ENCODE measurements at regions of chr15 and their contacts with region 1.

Region 1: DNA sequence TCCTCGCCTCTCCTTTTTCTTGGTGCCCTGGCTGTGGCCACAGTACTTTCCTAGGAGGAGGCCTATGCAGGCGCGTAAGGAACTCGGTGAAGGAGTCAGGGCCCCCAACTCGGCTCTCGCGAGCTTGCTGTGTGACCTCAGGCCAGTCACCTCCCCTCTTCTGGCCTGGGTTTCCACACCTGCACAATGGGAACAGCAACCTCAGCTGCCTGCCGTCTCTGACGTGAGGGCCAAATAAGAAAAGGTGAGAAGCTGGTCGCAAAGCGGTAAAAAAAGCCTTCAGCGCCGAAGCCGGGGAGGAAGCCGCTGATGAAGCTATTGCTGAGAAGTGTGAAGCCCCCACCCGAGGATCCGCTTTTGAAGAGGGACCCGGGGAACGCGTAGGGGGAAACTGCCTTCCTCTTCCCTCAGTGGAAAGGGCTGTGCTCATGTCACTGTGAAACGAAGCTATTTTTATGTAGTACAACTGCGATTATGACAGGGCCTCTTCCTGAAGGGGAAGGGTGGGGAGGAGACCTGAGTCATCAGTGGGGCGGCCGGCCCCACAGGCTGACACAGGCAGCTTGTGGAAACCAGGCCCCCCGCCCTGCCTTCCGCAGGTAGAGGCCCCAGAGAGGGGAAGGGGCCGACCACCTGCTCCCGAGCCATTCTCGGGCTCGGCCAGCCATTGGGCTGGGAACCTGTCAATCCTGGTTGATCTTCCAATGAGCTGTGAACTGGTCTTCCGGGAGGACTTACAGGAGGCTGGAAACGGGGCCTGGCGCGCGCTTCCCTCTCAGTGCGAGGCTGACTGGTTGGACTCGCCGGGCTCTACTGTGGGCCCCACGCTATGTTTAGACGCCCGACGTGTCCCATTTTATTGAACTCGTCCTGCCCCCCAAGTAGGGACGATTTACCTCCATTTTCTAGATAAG is 18.0 kb upstream of the ANKDD1A start:
- DNase-seq: peak; percentile 99
- H3K4me3 Mint-ChIP-seq: peak overlapping the region; percentile 95
- H3K27ac Mint-ChIP-seq: peak overlapping the region; percentile 99
- H3K4me1 Mint-ChIP-seq: peaks cover 59% of the 10 kb centered on the region
- H3K27me3 Mint-ChIP-seq: no peaks in the 10 kb centered on the region

Region 2: DNA sequence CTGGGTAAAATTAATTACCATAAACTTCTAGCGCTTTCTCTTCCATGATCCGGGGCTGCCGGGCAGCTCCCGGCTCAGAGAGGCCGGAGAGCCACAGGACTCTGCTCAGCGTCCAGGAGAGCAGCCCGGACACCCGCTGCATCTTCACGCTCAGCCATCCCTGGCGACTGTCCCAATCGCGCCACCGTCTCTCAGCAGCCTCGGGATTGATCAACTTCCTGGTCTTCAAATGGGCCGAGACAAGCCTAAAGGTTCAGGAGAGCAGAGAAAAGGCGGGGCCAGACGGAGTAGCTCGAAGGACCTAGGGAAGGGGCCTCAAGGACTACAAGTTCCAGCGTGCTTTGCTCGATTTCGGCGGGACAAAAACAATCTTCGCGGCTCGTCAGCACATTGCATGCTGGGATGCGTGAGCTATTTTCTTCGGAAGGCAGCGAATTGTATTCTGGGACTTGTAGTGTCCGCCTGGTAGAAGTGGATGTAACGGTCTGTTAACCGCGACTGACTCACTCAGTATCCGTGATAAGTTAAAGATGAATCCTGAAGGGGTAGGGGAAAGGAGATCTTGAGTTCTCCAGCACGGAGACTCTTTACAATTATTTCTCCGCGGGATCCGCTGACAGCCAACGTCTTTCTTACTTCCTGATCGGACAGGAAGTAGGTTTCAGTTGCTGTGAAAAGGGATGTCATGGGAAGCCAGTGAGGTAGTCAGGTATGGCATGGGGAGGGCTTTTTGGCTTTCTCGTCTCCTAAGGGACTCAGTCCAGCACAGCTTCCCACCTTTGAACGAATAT is 799.9 kb before region 1 on chr15 and contains the start of gene CIAO2A:
- CTCF ChIA-PET with region 1: no interaction called
- POLR2A ChIA-PET with region 1: no interaction called
- intact Hi-C with region 1: loop called (anchors 5 kb)
- DNase-seq: peak; percentile 98
- H3K4me3 Mint-ChIP-seq: peak within 1 kb of the TSS; percentile 99
- H3K27ac Mint-ChIP-seq: peak within 1 kb of the TSS; percentile 97
- H3K4me1 Mint-ChIP-seq: peaks cover 62% of the 10 kb centered on the region
- H3K27me3 Mint-ChIP-seq: no peaks in the 10 kb centered on the region
- total RNA-seq, gene CIAO2A: 95.4 to 97.4 TPM

Region 3: DNA sequence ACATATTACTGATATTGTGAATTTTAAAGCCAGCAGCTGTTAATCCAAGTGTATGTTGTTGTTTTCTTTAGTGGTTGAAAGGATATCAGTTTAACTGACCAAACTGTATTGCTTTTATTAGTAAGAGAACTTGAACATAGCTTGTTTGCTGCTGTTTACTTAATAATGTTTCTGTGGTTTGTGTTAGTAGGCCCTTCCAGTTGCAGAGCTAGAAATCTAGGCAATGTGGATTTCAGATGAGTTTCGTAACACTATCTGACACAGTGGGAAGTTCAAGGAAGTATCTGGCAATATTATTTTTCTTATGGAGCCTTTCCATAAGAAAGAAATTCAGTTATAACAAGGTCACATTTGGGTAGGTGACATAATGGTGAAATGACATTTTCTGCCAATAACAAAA is 414.9 kb before region 1 on chr15:
- CTCF ChIA-PET with region 1: no interaction called
- POLR2A ChIA-PET with region 1: no interaction called
- intact Hi-C with region 1: no loop called
- DNase-seq: no peak
- H3K4me3 Mint-ChIP-seq: no peak overlapping the region
- H3K27ac Mint-ChIP-seq: no peak overlapping the region
- H3K4me1 Mint-ChIP-seq: peaks cover 23% of the 10 kb centered on the region
- H3K27me3 Mint-ChIP-seq: no peaks in the 10 kb centered on the region

Region 4: GRCh38 chr15:64825431-64826294 is 68.1 kb before region 1 on chr15 and contains the start of gene PIF1:
- CTCF ChIA-PET with region 1: interaction called, 3 read pairs
- POLR2A ChIA-PET with region 1: interaction called, 8 read pairs
- intact Hi-C with region 1: loop called (anchors 1 kb)
- DNase-seq: peak; percentile 93
- H3K4me3 Mint-ChIP-seq: peak within 1 kb of the TSS; percentile 82
- H3K27ac Mint-ChIP-seq: peak within 1 kb of the TSS; percentile 56
- H3K4me1 Mint-ChIP-seq: peaks cover 24% of the 10 kb centered on the region
- H3K27me3 Mint-ChIP-seq: peaks cover 4% of the 10 kb centered on the region
- total RNA-seq, gene PIF1: 23.6 to 30.2 TPM

Region 5: GRCh38 chr15:64841258-64842095 is 52.3 kb before region 1 on chr15 and contains the start of gene PLEKHO2:
- CTCF ChIA-PET with region 1: interaction called, 34 read pairs
- POLR2A ChIA-PET with region 1: interaction called, 18 read pairs
- intact Hi-C with region 1: loop called (anchors 1 kb)
- DNase-seq: peak; percentile 95
- H3K4me3 Mint-ChIP-seq: peak within 1 kb of the TSS; percentile 95
- H3K27ac Mint-ChIP-seq: peak within 1 kb of the TSS; percentile 84
- H3K4me1 Mint-ChIP-seq: peaks cover 60% of the 10 kb centered on the region
- H3K27me3 Mint-ChIP-seq: no peaks in the 10 kb centered on the region
- total RNA-seq, gene PLEKHO2: 15.3 to 15.6 TPM

Region 6: DNA sequence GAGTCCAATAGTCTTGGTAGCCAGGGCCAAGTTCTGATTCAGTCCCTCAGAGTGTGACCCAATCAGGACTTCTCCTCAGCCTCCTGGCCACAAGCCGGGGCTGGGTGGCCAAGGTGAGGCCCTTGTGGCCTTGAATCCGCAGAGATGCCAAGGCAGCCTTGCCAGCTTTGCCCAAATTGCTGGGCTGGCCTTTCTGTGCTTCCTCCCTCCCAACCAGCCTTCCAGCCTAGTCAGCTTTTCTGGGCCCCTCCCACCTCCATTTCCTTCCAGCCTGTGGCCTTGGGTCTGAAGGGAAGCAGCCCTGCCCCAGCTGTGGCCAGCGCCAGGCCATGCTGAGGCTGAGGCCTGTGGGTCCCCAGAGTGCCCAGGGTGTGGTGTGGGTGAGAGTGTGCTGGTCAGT is 16.3 kb before region 1 on chr15:
- CTCF ChIA-PET with region 1: interaction called, 6 read pairs
- POLR2A ChIA-PET with region 1: interaction called, 98 read pairs
- intact Hi-C with region 1: loop called (anchors 2 kb)
- DNase-seq: peak; percentile 43
- H3K4me3 Mint-ChIP-seq: no peak overlapping the region
- H3K27ac Mint-ChIP-seq: no peak overlapping the region
- H3K4me1 Mint-ChIP-seq: peaks cover 33% of the 10 kb centered on the region
- H3K27me3 Mint-ChIP-seq: no peaks in the 10 kb centered on the region

Region 7: GRCh38 chr15:64911311-64912191 is 17.8 kb after region 1 on chr15 and contains the start of gene ANKDD1A:
- CTCF ChIA-PET with region 1: interaction called, 60 read pairs
- POLR2A ChIA-PET with region 1: interaction called, 36 read pairs
- intact Hi-C with region 1: no loop called
- DNase-seq: peak; percentile 66
- H3K4me3 Mint-ChIP-seq: peak within 1 kb of the TSS; percentile 65
- H3K27ac Mint-ChIP-seq: no peak within 1 kb of the TSS
- H3K4me1 Mint-ChIP-seq: peaks cover 5% of the 10 kb centered on the region
- H3K27me3 Mint-ChIP-seq: peaks cover 1% of the 10 kb centered on the region
- total RNA-seq, gene ANKDD1A: 6.3 to 6.6 TPM

Region 8: GRCh38 chr15:65792130-65792987 is 898.6 kb after region 1 on chr15 and contains the start of gene DENND4A:
- CTCF ChIA-PET with region 1: no interaction called
- POLR2A ChIA-PET with region 1: no interaction called
- intact Hi-C with region 1: loop called (anchors 5 kb)
- DNase-seq: peak; percentile 99
- H3K4me3 Mint-ChIP-seq: peak within 1 kb of the TSS; percentile 82
- H3K27ac Mint-ChIP-seq: peak within 1 kb of the TSS; percentile 97
- H3K4me1 Mint-ChIP-seq: peaks cover 60% of the 10 kb centered on the region
- H3K27me3 Mint-ChIP-seq: no peaks in the 10 kb centered on the region
- total RNA-seq, gene DENND4A: 39.9 to 41.3 TPM

Measured in activated CD4-positive, alpha-beta memory T cell treated with anti-CD3 and anti-CD28 coated beads for 36 hours (primary cell).